Panc1 (cell line): ENCODE measurements at regions of chr15 and their contacts with region 1.

Region 1: DNA sequence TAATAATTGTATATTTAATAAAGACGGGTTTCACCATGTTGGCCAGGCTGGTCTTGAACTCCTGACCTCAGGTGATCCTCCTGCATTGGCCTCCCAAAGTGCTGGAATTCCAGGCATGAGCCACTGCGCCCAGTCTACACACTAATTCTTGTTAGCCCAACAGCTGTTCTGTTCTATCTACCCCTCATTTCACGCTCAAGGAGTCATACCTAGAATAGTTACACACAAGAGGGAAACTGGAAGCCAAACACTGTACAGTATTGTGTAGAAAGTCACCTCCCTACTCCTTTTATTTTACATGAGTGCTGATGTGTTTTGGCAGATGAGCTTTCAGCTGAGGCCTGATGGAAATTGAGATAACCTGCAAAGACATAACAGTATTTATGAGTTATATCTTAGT is 13.4 kb upstream of the CTDSPL2 start:
- DNase-seq: no peak
- ATAC-seq: no peak
- H3K4me3 ChIP-seq: no peak overlapping the region
- H3K27ac ChIP-seq: no peak overlapping the region
- H3K4me1 ChIP-seq: no peaks in the 10 kb centered on the region
- H3K27me3 ChIP-seq: no peaks in the 10 kb centered on the region
- CTCF ChIP-seq: no peak

Region 2: DNA sequence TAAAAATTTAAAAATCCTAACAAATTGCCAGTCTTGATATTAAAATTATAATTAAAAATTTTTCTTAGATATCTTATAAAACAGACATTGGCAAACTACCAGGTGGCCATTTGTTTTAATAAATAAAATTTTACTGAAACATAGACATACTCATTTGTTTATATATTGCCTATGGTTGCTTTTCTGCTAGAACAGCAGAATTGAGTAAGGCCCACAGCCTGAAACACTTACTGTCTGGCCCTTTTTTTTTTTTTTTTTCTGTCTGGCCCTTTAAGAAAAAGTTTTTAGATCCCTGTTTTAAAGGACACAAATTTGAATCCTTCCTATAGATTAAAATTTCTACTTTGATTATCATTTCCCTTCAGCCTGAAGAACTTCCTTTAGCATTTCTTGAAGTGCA is 47.0 kb before region 1 on chr15:
- CTCF ChIA-PET with region 1: interaction called, 10 read pairs
- POLR2A ChIA-PET with region 1: no interaction called
- in situ Hi-C with region 1: no loop called
- intact Hi-C with region 1: no loop called
- DNase-seq: no peak
- ATAC-seq: no peak
- H3K4me3 ChIP-seq: no peak overlapping the region
- H3K27ac ChIP-seq: no peak overlapping the region
- H3K4me1 ChIP-seq: no peaks in the 10 kb centered on the region
- H3K27me3 ChIP-seq: no peaks in the 10 kb centered on the region
- CTCF ChIP-seq: no peak